ENCODE measurements at regions of chr3 and their contacts with region 1.

Region 1: GRCh38 chr3:43389388-43390254 is 103.3 kb downstream of the SNRK start:
- DNase-seq: peak in 2 of 4 experiments; percentile 45 to 59
- ATAC-seq: peak; percentile 83
- H3K4me3 ChIP-seq: no peak overlapping the region
- H3K27ac ChIP-seq: peak overlapping the region; percentile 43; the same call in 1 of the 3 replicates
- H3K4me1 ChIP-seq: peaks cover 0 to 18% of the 10 kb centered on the region in 2 experiments; a peak in 4 of 5 replicates
- H3K27me3 ChIP-seq: no peaks in the 10 kb centered on the region
- CTCF ChIP-seq: no peak
- EP300 ChIP-seq: peak; percentile 43
- POLR2A ChIP-seq: no peak
- RAD21 ChIP-seq: no peak

Region 2: GRCh38 chr3:42898882-42899675 is 490.5 kb before region 1 on chr3:
- CTCF ChIA-PET with region 1: no interaction called
- POLR2A ChIA-PET with region 1: no interaction called
- in situ Hi-C with region 1: no loop called
- intact Hi-C with region 1: no loop called
- DNase-seq: no peak
- ATAC-seq: peak; percentile 87
- H3K4me3 ChIP-seq: no peak overlapping the region
- H3K27ac ChIP-seq: no peak overlapping the region
- H3K4me1 ChIP-seq: no peaks in the 10 kb centered on the region; a peak in 1 of 5 replicates
- H3K27me3 ChIP-seq: no peaks in the 10 kb centered on the region
- CTCF ChIP-seq: peak; percentile 29 to 38 (median 30); a peak in 2 of 6 replicates
- EP300 ChIP-seq: no peak
- POLR2A ChIP-seq: no peak
- RAD21 ChIP-seq: 0 out of 4 replicates have a peak, but pooled peaks of 1 of the 2 experiments have one; percentile 10

Region 3: GRCh38 chr3:43405888-43406642 is 16.4 kb after region 1 on chr3:
- CTCF ChIA-PET with region 1: no interaction called
- POLR2A ChIA-PET with region 1: interaction called, 11 read pairs
- in situ Hi-C with region 1: no loop called
- intact Hi-C with region 1: no loop called
- DNase-seq: peak in 2 of 4 experiments; percentile 26 to 47
- ATAC-seq: peak; percentile 73
- H3K4me3 ChIP-seq: no peak overlapping the region
- H3K27ac ChIP-seq: no peak overlapping the region
- H3K4me1 ChIP-seq: peaks cover 0 to 12% of the 10 kb centered on the region in 2 experiments; a peak in 3 of 5 replicates
- H3K27me3 ChIP-seq: no peaks in the 10 kb centered on the region
- CTCF ChIP-seq: no peak
- EP300 ChIP-seq: no peak
- POLR2A ChIP-seq: no peak
- RAD21 ChIP-seq: no peak